Activated T-helper 2 cell treated with anti-CD3 and anti-CD28 coated beads, Interferon-gamma antibody, Interleukin-2, Interleukin-4, amounts not matched to agents 10 μg/mL and 5 μg/mL and 100 μg/mL, durations not matched to agents 14 hours and 24 hours and 36 hours (primary cell): ENCODE measurements at regions of chr14 and their contacts with region 1.

Region 1: DNA sequence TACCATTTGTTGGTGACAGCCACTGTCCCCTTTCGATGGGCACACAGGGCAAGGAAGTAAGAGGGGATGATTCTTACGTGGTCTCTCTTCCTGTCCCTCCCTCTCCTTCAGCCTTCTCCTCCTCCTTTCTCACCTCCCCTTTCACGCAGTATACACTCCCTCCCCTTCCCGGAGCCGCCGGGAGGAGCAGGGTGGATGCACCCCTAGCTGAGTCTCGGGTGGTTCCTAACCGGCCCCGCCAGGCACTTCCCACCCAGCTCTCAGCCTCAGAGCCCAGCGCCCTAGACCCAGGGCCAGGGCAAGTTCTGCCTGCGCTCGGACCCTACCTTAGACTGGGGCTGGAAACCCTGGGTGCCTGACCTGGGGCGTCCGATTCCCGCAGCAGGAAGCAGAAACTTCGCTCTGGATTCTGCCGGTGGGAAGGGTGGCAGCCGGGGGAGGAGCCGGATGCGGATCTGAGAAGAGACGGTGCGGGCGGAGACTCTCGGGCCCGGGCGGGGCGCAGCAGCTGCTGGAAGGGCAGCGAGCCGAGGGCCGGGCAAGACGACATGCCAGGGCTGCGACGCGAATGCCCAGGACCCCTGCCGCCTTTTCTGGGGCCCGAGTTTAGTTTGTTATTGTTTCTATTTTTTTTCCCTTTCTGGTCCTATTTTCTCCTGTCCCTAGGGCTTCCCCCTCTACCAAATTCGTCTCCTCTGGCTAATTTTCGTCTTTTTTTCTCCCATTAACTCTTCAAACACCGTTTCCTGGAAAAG is at the start of gene TEP1:
- DNase-seq: peak; percentile 64
- H3K4me3 Mint-ChIP-seq: peak within 1 kb of the TSS; percentile 97
- H3K27ac Mint-ChIP-seq: peak within 1 kb of the TSS; percentile 91
- H3K4me1 Mint-ChIP-seq: peaks cover 26% of the 10 kb centered on the region
- H3K27me3 Mint-ChIP-seq: no peaks in the 10 kb centered on the region
- total RNA-seq, gene TEP1: 32.7 and 33.6 TPM in 2 replicates

Region 2: DNA sequence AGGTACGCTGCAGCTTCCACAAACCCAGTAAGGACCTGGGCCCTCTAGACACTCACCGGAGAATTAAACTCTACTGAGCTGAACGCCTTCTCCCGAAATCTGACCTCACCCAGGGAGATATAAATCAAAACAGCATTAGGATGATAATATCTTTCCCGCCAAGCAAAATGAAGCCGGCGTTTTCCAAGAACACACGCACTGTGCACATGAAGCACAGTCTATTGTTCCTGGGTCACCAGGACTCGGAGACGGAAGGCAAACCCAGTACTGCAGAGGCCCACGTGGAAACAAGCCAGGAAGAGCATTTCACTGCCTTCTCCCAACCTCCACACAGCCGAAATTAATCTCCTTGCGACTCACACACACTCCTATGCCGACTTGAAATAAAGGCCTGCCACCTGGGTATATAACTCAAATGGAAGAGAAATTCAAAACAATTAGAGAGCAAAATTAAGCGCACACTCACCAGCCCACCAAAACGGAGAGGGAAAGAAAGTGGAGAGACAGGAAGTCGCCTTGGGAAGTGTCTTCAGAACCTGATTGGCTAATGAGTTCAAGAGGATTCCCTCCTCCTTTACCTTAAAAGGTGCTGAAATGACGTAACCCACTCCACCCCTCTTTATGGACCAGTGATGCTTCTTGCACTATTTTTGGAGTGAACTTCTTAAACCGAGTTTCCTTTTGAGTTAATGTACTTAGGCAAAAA is 80.3 kb before region 1 on chr14 and contains the start of gene CCNB1IP1:
- intact Hi-C with region 1: loop called (anchors 1 kb)
- DNase-seq: peak; percentile 48
- H3K4me3 Mint-ChIP-seq: peak within 1 kb of the TSS; percentile 97
- H3K27ac Mint-ChIP-seq: peak within 1 kb of the TSS; percentile 88
- H3K4me1 Mint-ChIP-seq: peaks cover 45% of the 10 kb centered on the region
- H3K27me3 Mint-ChIP-seq: peaks cover 4% of the 10 kb centered on the region
- total RNA-seq, gene CCNB1IP1: 44.0 and 46.8 TPM in 2 replicates

Region 3: DNA sequence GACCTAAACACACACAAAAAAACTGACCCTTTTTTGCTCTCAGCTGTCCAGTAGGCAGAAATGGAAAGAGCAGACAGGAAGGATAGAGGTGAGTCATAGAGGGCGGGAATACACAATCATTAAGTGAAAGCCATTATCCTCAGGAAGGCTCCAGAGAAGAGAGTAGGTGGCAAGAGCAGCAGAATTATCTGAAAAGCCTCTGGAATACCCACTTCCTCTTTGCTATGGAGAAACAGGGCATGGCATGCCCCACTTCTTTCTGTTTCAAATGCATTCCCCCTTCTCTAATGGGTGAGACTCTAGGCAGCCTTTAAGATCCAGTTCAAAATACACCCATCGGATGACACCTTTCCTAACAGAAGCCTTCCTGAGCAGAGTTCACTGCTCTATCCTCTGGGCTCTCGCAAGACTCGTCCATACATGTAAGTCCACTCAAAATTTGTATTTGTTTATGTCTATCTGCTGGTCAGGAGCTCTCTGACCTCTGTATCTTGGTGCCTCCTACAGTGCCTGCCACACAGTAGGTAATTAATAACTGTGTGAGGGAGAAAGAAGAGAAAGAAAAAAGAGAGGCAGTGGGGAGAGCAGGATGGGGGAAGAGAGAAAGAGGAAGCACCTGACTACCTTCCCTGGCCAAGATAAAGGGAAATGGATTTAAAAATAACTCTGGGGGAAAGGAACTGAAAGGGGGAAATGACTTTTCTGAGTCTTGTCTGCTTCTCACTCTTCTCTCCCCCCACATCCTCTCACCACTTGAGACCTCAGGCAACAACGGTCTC is 14.2 kb after region 1 on chr14:
- intact Hi-C with region 1: loop called (anchors 2 kb)
- DNase-seq: no peak
- H3K4me3 Mint-ChIP-seq: peak overlapping the region; percentile 27
- H3K27ac Mint-ChIP-seq: peak overlapping the region; percentile 81
- H3K4me1 Mint-ChIP-seq: peaks cover 21% of the 10 kb centered on the region
- H3K27me3 Mint-ChIP-seq: no peaks in the 10 kb centered on the region

Region 4: GRCh38 chr14:20454516-20455354 is 41.5 kb after region 1 on chr14 and contains the starts of genes APEX1 and OSGEP:
- intact Hi-C with region 1: loop called (anchors 1 kb)
- DNase-seq: peak; percentile 97
- H3K4me3 Mint-ChIP-seq: peak within 1 kb of the TSS; percentile 63
- H3K27ac Mint-ChIP-seq: no peak within 1 kb of the TSS
- H3K4me1 Mint-ChIP-seq: peaks cover 11% of the 10 kb centered on the region
- H3K27me3 Mint-ChIP-seq: no peaks in the 10 kb centered on the region
- total RNA-seq, gene APEX1: 217 and 228 TPM in 2 replicates
- total RNA-seq, gene OSGEP: 66.0 and 66.5 TPM in 2 replicates

Region 5: DNA sequence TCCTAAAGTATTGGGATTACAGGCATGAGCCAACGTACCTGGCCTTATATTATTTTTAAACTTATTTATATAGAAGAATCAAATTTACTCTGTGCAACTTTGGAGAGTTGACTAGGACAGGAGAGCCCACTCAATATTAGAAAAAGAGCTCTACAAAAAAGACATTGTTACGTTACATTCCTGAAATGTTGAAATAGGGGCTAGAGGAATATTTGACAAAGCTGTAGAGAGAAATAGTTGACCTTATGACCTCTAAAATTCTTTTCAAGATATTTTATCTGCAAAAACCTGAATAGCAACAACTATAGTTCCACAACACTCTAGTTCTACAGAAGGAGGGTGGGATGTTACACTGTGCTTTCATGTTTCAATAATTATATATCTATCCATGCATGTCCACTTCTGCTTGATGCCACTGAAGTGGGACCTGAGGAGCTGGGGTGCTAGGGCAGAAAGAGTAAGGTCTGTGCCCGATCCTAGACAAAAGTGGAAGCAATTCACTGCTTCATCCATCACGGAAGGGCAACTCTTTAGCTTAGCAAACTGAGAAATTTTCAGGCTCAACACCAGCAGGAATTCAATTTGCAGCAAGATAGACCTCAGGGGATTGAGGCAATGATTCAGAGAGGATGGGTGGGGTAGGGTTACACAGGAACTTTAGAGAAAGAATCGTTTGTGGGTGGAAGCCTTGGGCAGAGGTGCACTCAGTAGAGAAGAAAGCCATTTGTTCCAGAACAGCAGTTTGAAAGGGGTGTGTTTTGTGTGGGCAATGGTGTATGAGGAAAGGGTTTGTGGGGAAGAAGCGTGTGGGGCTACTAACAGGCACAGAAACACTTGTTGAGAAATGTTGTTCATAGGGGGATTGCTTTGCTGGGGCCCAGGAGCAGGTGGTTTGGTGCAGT is 76.1 kb after region 1 on chr14:
- intact Hi-C with region 1: no loop called
- DNase-seq: no peak
- H3K4me3 Mint-ChIP-seq: peak overlapping the region; percentile 30
- H3K27ac Mint-ChIP-seq: peak overlapping the region; percentile 62
- H3K4me1 Mint-ChIP-seq: peaks cover 57% of the 10 kb centered on the region
- H3K27me3 Mint-ChIP-seq: no peaks in the 10 kb centered on the region

Region 6: GRCh38 chr14:20501346-20501745 is 88.1 kb after region 1 on chr14:
- intact Hi-C with region 1: no loop called
- DNase-seq: no peak
- H3K4me3 Mint-ChIP-seq: no peak overlapping the region
- H3K27ac Mint-ChIP-seq: no peak overlapping the region
- H3K4me1 Mint-ChIP-seq: peaks cover 5% of the 10 kb centered on the region
- H3K27me3 Mint-ChIP-seq: peaks cover 3% of the 10 kb centered on the region

Region 7: GRCh38 chr14:20530771-20531571 is 117.7 kb after region 1 on chr14:
- intact Hi-C with region 1: loop called (anchors 5 kb)
- DNase-seq: peak; percentile 56
- H3K4me3 Mint-ChIP-seq: no peak overlapping the region
- H3K27ac Mint-ChIP-seq: no peak overlapping the region
- H3K4me1 Mint-ChIP-seq: peaks cover 8% of the 10 kb centered on the region
- H3K27me3 Mint-ChIP-seq: peaks cover 33% of the 10 kb centered on the region

Region 8: GRCh38 chr14:20682435-20683124 is 269.4 kb after region 1 on chr14:
- intact Hi-C with region 1: loop called (anchors 5 kb)
- DNase-seq: peak; percentile 68
- H3K4me3 Mint-ChIP-seq: no peak overlapping the region
- H3K27ac Mint-ChIP-seq: no peak overlapping the region
- H3K4me1 Mint-ChIP-seq: peaks cover 26% of the 10 kb centered on the region
- H3K27me3 Mint-ChIP-seq: peaks cover 2% of the 10 kb centered on the region